T-cell (primary cell): ENCODE measurements at regions of chr5 and their contacts with region 1.

Region 1: DNA sequence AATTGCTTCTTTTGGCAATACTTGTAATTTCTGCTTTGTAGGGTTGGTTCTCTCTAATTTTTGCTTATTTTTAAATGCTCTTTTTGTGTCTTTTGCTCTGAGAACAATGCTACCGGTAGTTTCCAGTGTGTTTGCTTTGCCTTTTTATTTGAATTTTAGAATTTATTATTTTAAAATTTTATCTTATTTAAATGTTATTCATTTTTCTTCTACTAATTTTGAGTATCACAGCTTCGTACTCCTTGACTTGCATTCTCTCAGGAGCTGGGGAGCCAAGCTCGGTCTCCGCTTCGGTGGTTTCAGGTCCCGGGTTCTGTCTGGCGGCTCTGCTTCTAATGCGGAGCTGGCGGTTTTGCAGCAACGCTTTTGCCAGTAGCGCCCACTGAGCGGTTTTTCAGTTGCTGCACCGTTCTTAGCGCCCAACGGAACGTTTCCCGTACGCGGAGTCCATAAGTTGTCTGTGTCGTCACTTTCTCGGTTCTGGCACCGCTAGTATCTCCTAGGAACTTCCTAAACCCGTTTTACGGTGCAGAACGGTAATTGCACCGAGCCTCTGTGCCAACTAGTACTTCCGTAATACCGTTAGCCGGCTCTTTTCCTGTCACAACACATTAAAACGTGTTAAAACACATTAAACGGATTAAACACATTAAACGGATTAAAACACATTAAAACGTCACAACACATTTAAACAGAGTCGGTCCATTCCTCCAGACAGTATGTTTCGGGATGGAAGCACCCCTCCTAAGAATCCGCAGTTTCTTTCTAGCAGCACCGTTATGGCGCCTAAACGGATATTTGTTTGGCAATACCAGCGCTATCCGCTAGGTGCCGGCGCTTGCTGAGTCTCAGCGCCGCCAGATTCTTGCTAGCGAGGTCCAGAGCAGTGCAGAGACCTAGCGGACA is 45.6 kb downstream of the ANXA2R start:
- DNase-seq: peak; percentile 73 to 91 (median 82)
- ATAC-seq: peak; percentile 62 to 72 (median 66)
- H3K4me3 ChIP-seq: peak overlapping the region; percentile 83 to 95
- H3K4me3 Mint-ChIP-seq: peak overlapping the region; percentile 99 to 100 (median 100)
- H3K27ac ChIP-seq: peak overlapping the region; percentile 89
- H3K27ac Mint-ChIP-seq: peak overlapping the region; percentile 100
- H3K4me1 ChIP-seq: peaks cover 22 to 32% of the 10 kb centered on the region in 2 experiments
- H3K4me1 Mint-ChIP-seq: peaks cover 29 to 37% (median 35%) of the 10 kb centered on the region in 3 donors
- H3K27me3 ChIP-seq: no peaks in the 10 kb centered on the region
- H3K27me3 Mint-ChIP-seq: no peaks in the 10 kb centered on the region

Region 2: GRCh38 chr5:42950440-42951292 is 43.8 kb before region 1 on chr5:
- CTCF ChIA-PET with region 1: interaction called in 1 of 2 experiments, 64 read pairs
- POLR2A ChIA-PET with region 1: interaction called, 14 to 70 read pairs
- DNase-seq: peak; percentile 17 to 80 (median 41)
- ATAC-seq: peak; percentile 17 to 58 (median 44)
- H3K4me3 ChIP-seq: peak overlapping the region; percentile 77 to 98
- H3K4me3 Mint-ChIP-seq: peak overlapping the region; percentile 96 to 98 (median 98)
- H3K27ac ChIP-seq: peak overlapping the region; percentile 99
- H3K27ac Mint-ChIP-seq: peak overlapping the region; percentile 100
- H3K4me1 ChIP-seq: peaks cover 15 to 46% of the 10 kb centered on the region in 2 experiments
- H3K4me1 Mint-ChIP-seq: peaks cover 34 to 45% (median 40%) of the 10 kb centered on the region in 3 donors
- H3K27me3 ChIP-seq: no peaks in the 10 kb centered on the region
- H3K27me3 Mint-ChIP-seq: no peaks in the 10 kb centered on the region

Region 3: GRCh38 chr5:43008369-43009153 is 14.1 kb after region 1 on chr5:
- CTCF ChIA-PET with region 1: interaction called, 8 to 84 read pairs
- POLR2A ChIA-PET with region 1: interaction called, 16 to 48 read pairs
- DNase-seq: peak; percentile 83 to 97 (median 90)
- ATAC-seq: peak; percentile 65 to 72 (median 71)
- H3K4me3 ChIP-seq: peak overlapping the region; percentile 54 to 97
- H3K4me3 Mint-ChIP-seq: peak overlapping the region; percentile 85 to 87 (median 85)
- H3K27ac ChIP-seq: peak overlapping the region; percentile 87
- H3K27ac Mint-ChIP-seq: peak overlapping the region; percentile 96 to 99
- H3K4me1 ChIP-seq: peaks cover 22 to 34% of the 10 kb centered on the region in 2 experiments
- H3K4me1 Mint-ChIP-seq: peaks cover 40 to 51% (median 42%) of the 10 kb centered on the region in 3 donors
- H3K27me3 ChIP-seq: no peaks in the 10 kb centered on the region
- H3K27me3 Mint-ChIP-seq: no peaks in the 10 kb centered on the region